PC-3 (cell line): ENCODE measurements at regions of chr13 and their contacts with region 1.

Region 1: GRCh38 chr13:72781451-72782439 is at the starts of genes DIS3 and PIBF1:
- DNase-seq: peak; percentile 95
- ATAC-seq: peak; percentile 95
- H3K4me3 ChIP-seq: peak within 1 kb of the TSS; percentile 91
- H3K27ac ChIP-seq: peak within 1 kb of the TSS; percentile 36
- H3K4me1 ChIP-seq: peaks cover 8% of the 10 kb centered on the region
- H3K27me3 ChIP-seq: no peaks in the 10 kb centered on the region
- CTCF ChIP-seq: no peak
- total RNA-seq, gene DIS3: 25.5 and 29.0 TPM in 2 replicates
- total RNA-seq, gene PIBF1: 4.8 and 7.9 TPM in 2 replicates

Region 2: GRCh38 chr13:72727417-72728289 is 54.1 kb before region 1 on chr13 and contains the starts of genes BORA and MZT1:
- CTCF ChIA-PET with region 1: no interaction called
- POLR2A ChIA-PET with region 1: no interaction called
- intact Hi-C with region 1: loop called (anchors 2 kb)
- DNase-seq: peak; percentile 94
- ATAC-seq: peak; percentile 96
- H3K4me3 ChIP-seq: peak within 1 kb of the TSS; percentile 95
- H3K27ac ChIP-seq: peak within 1 kb of the TSS; percentile 48
- H3K4me1 ChIP-seq: peaks cover 8% of the 10 kb centered on the region
- H3K27me3 ChIP-seq: no peaks in the 10 kb centered on the region
- CTCF ChIP-seq: no peak
- total RNA-seq, gene BORA: 9.5 and 11.1 TPM in 2 replicates
- total RNA-seq, gene MZT1: 7.9 and 17.0 TPM in 2 replicates